ENCODE measurements at regions of chr18 and their contacts with region 1.

Region 1: DNA sequence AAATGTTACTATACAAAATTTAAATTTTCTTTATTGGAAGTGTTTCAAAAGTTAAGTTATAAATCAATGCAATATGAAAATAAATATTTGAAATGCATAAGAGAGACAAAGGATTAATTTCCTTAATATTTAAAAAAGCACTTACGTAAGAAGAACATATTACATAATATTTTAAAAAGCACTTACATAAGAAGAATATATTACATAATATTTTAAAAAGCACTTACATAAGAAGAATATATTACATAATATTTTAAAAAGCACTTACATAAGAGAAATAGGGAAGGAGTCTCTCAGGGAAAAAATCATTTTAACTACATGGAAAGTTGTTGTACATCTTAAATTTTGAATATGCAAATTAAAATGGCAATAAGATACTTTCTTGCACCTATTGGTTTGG is 17.4 kb upstream of the B4GALT6 start:
- DNase-seq: no peak
- H3K4me3 ChIP-seq: no peak overlapping the region
- CTCF ChIP-seq: no peak
- POLR2A ChIP-seq: no peak

Region 2: DNA sequence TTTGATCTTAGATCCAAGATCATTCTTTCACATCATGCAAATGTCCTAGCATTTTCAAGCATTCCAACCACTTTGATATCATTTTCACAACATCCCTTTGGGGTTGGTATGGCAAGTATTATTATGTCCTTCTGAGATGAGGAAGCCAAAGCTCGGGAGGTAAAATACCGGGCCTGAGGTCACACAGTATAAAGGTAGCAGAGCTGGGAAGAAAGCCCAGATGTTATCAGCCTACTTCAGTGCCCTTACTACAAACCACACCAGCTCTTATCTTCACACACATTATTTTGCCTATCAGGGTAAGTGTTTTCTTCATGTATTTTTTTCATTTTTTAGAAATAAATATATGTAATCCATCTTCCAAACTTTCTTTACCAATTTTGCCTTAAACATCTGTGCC is 13.1 kb before region 1 on chr18:
- intact Hi-C with region 1: loop called (anchors 1 kb)
- DNase-seq: no peak
- H3K4me3 ChIP-seq: no peak overlapping the region
- CTCF ChIP-seq: no peak
- POLR2A ChIP-seq: no peak

Measured in lower leg skin (tissue), 4 donors.